ENCODE measurements at regions of chr10 and their contacts with region 1.

Region 1: DNA sequence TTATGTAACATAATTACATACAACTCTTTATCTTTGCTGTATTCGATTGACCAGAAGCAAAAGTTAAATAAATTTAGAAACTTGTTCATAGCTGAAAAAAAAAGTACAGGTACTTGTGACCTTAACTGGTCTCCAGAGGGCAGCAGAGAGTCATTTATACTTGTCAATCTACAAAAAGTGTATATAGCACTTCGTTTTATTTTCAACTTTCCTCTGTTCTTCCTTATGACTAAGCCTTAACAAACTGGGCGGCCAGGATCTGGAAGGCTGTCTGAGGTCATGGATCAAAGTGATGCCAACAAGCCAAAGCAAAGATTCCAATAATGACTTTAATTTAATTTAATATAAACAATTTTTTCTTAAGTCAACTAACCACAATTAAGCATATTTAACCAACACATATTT is 29.8 kb downstream of the C10orf67 start:
- DNase-seq: peak in 1 of 2 donors; percentile 72
- ATAC-seq: peak in 5 of 8 donors; percentile 56 to 65 (median 58)
- H3K4me3 ChIP-seq: no peak overlapping the region
- H3K27ac ChIP-seq: no peak overlapping the region
- H3K4me1 ChIP-seq: peaks cover 0 to 11% (median 0%) of the 10 kb centered on the region in 9 donors
- H3K27me3 ChIP-seq: no peaks in the 10 kb centered on the region
- CTCF ChIP-seq: peak; percentile 40 to 88 (median 78)

Region 2: DNA sequence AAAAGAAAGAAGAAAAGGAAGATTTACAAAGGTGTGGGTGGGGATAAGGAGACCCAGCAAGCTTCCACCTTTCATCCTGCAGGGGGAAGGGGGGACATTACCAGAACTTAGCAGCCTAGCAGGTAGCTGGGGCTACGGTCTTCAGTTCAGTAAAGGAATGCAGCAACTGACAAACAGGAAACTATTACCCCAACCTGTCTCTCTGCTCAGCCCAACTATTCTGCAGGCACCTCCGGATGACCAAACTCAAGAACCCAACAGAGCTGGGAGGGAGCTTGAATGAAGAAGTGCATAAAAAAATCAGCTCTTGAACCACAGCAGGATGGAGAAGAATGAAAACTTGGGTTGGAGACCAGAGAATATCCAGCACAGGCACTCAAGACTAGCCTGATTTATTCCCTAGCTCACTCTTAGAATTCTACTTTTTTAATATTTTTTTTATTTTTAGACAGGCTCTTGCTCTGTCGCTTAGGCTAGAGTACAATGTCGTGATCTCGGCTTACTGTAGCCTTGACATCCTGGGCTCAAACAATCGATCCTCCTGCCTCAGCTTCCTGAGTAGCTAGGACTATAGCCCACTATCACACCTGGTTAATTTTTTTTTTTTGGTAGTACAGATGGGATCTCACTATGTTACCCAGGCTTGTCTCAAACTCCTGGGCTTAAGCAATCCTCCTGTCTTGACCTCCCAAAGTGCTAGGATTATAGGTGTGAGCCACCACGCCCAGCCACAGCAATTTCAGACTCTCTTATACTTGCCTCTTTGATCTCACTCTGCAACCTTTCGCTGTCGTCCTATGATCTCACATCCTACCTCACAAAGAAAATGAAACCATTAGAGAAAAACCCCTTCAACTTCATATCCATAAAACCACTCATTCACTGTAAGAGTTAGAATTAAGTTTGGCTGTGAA is 48.3 kb after region 1 on chr10:
- intact Hi-C with region 1: loop called in 1 of 10 experiments (anchors 5 kb)
- DNase-seq: no peak
- ATAC-seq: no peak
- H3K4me3 ChIP-seq: no peak overlapping the region
- H3K27ac ChIP-seq: peak overlapping the region in 1 of 10 donors; percentile 7
- H3K4me1 ChIP-seq: peaks cover 0 to 12% (median 0%) of the 10 kb centered on the region in 9 donors
- H3K27me3 ChIP-seq: no peaks in the 10 kb centered on the region
- CTCF ChIP-seq: no peak

Region 3: GRCh38 chr10:23525406-23525805 is 210.6 kb after region 1 on chr10:
- intact Hi-C with region 1: loop called (anchors 1 to 5 kb)
- DNase-seq: peak in 1 of 2 donors; percentile 18
- ATAC-seq: peak in 6 of 8 donors; percentile 55 to 84 (median 70)
- H3K4me3 ChIP-seq: no peak overlapping the region
- H3K27ac ChIP-seq: no peak overlapping the region
- H3K4me1 ChIP-seq: no peaks in the 10 kb centered on the region
- H3K27me3 ChIP-seq: no peaks in the 10 kb centered on the region
- CTCF ChIP-seq: peak; percentile 17 to 69 (median 60)

Region 4: DNA sequence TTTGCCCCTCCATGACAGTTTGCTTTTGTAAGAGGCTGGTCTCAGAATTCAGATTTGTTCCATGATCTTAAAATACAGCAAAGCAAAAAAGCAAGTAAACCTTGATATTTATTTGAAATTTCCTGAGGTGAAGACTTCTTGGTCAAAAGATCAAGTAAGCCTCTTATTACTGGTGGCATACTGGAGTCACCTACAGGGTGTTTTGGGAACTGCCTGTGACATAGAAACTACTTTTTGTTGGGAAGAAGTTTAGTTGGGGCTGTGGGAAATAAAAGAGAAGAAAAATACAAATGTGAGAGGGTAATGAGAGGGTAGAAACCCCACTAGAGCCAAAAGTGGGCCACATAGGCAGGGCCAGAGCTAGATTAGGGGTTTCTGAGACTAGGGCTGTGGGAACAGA is 341.9 kb after region 1 on chr10:
- intact Hi-C with region 1: loop called in 1 of 10 experiments (anchors 5 kb)
- DNase-seq: no peak
- ATAC-seq: no peak
- H3K4me3 ChIP-seq: no peak overlapping the region
- H3K27ac ChIP-seq: no peak overlapping the region
- H3K4me1 ChIP-seq: no peaks in the 10 kb centered on the region
- H3K27me3 ChIP-seq: peaks cover 0 to 15% (median 0%) of the 10 kb centered on the region in 7 donors
- CTCF ChIP-seq: peak in 8 of 9 donors; percentile 9 to 66 (median 50)

Region 5: DNA sequence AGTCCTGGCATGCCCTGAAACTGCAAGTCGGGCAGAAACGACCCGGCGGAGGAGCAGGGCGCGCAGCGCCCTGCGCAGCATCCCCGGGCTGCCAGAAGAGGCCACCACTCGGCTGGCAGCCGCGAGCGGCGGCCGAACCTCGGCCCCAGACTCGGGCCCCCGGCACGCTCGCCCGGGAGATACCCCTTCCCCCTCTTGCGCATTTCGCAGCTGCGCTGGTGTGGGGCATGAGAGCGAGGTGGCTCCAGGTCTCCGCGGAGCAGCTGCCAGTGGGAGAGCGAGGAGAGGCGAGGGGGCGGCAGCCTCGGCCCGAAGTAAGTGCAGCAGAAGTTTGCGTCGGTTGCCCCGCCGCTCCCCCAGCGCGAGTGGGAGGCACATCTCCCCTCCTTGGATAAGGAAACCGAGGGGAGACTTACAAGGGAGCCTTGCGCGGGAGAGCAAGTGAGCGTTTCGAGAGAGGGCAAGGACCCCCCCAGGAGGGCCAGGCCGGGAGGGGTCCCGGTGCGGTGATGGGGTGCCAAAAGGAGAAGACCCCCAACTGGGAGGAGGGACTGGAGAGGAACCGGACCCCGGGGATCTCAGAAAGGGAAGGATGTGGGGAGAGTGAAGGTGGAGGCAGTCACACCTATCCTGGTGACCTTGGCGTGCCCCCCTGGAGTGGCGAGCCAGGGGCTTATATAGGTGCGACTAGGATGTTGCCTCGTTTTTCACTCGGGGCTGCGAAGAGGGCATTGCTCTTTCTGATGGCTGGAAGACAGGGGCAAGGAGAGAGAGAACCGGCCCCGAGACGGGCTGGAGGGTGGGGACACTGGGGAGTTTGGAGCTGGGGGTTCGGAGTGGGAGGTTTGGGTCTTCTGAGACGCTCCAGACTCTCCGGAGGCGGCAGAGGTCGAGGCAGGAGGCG is 380.3 kb after region 1 on chr10:
- intact Hi-C with region 1: loop called in 8 of 10 experiments (anchors 5 to 10 kb)
- DNase-seq: no peak
- ATAC-seq: peak in 2 of 8 donors; percentile 12 to 20
- H3K4me3 ChIP-seq: peak overlapping the region; percentile 14 to 47 (median 35)
- H3K27ac ChIP-seq: no peak overlapping the region
- H3K4me1 ChIP-seq: peaks cover 3 to 22% (median 18%) of the 10 kb centered on the region in 9 donors
- H3K27me3 ChIP-seq: peaks cover 19 to 87% (median 73%) of the 10 kb centered on the region in 7 donors
- CTCF ChIP-seq: no peak

Region 6: DNA sequence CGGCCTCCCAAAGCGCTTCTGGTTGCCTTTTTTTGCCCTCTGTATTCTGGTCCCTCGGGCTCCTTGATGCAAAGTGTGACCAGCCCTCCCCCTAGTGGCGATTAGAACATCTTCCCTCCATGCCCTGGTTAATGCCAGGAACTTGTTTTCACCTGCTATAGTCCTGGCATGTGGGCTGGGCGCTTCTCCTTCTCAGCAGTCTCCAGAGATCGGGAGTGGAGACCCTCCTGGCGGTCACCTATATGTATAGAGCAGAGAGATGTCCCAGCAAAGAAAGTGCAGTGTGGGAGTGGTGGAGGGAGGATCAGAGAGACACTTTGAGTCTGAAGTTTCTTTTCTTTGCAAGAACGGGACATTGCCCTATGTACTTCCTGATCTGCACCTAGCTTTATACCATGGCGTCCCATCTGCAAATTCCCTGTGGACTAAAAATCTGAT is 388.2 kb after region 1 on chr10:
- intact Hi-C with region 1: loop called in 8 of 10 experiments (anchors 5 to 10 kb)
- DNase-seq: peak in 1 of 2 donors; percentile 47
- ATAC-seq: peak in 5 of 8 donors; percentile 58 to 83 (median 73)
- H3K4me3 ChIP-seq: no peak overlapping the region
- H3K27ac ChIP-seq: no peak overlapping the region
- H3K4me1 ChIP-seq: peaks cover 0 to 5% (median 0%) of the 10 kb centered on the region in 9 donors
- H3K27me3 ChIP-seq: peaks cover 0 to 41% (median 14%) of the 10 kb centered on the region in 7 donors
- CTCF ChIP-seq: peak; percentile 37 to 73 (median 67)

Region 7: DNA sequence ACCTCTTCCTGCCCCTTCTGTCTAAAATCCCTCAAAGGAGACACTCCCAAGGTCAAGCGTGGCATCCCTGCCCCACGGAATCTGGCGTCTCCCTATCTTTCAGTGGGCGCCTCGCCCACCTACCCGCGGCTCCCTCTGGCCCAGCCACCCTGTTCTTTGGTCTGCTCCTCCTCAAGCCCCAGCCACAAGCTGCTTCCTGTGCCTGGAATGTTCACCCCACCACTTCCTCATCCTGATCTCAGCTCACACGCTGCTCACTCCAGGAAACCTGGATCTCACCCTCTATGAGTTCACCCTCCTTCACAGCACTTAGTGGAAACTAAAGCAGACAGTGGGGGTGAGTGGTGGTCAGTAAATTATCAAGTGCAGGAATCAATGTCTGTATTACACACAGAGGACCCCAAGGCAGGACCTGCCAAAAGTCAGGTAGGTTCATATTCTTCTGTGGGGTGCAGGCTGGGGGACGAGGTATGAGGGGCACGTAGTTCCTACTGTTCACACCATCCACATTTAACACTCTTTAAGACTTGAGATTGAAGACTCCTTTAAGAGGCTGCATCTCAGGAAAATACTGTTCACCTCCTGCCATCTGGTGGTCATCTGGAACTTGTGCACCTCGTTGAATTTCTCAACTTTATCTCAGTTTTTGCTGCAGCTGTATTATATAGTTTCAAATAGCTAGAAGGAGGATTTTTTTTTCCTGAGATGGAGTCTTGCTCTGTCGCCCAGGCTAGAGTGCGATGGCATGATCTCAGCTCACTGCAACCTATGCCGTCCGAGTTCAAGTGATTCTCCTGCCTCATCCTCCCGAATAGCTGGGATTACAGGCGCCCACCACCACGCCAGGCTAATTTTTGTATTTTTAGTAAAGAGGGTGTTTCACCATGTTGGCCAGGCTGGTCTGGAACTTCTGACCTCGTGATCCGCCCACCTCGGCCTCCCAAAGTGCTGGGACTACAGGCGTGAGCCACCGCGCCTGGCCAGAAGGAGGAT is 1242.2 kb after region 1 on chr10:
- intact Hi-C with region 1: loop called in 1 of 10 experiments (anchors 10 kb)
- DNase-seq: peak in 1 of 2 donors; percentile 32
- ATAC-seq: peak in 5 of 8 donors; percentile 23 to 54 (median 41)
- H3K4me3 ChIP-seq: no peak overlapping the region
- H3K27ac ChIP-seq: no peak overlapping the region
- H3K4me1 ChIP-seq: peaks cover 0 to 12% (median 9%) of the 10 kb centered on the region in 9 donors
- H3K27me3 ChIP-seq: no peaks in the 10 kb centered on the region
- CTCF ChIP-seq: peak; percentile 30 to 77 (median 63)